Lower leg skin (tissue), 4 donors: ENCODE measurements at regions of chr2 and their contacts with region 1.

Region 1: GRCh38 chr2:112726497-112727190 is 5.8 kb downstream of the NT5DC4 start:
- DNase-seq: peak; percentile 87 to 98
- H3K4me3 ChIP-seq: no peak overlapping the region
- CTCF ChIP-seq: peak in 1 of 3 donors; percentile 94
- POLR2A ChIP-seq: no peak

Region 2: GRCh38 chr2:112138159-112138773 is 588.4 kb before region 1 on chr2 and contains the start of gene FBLN7:
- intact Hi-C with region 1: no loop called
- DNase-seq: peak in 1 of 2 donors; percentile 86
- H3K4me3 ChIP-seq: peak within 1 kb of the TSS; percentile 39
- CTCF ChIP-seq: no peak
- POLR2A ChIP-seq: no peak
- total RNA-seq, gene FBLN7: 3.6 to 10.2 (median 5.9) TPM

Region 3: DNA sequence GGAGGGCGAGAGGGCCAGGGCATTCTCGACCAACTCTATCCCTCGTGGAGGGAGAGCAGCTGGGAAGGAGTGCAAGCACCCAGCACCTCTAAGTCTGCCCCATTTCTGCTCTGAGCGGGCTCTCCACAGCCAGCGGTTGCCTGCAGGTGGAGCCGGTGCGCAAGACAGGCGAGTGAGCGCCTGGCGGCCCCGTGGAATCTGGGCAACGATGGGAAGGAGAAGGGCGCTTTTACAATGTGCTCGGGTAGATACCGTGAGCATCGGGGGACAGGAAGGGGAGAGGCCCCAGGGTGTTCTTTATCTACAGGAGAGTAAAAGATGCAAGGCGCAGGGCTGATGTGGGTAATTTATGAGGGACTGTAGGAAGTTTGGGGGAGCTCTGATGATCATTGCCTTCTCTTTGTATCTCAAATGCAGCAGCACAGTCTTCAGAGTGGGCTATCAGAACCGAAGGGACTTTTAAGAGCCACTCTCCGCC is 245.6 kb before region 1 on chr2:
- intact Hi-C with region 1: loop called (anchors 10 kb)
- DNase-seq: peak; percentile 70 to 95
- H3K4me3 ChIP-seq: peak overlapping the region; percentile 63
- CTCF ChIP-seq: peak in 1 of 3 donors; percentile 13
- POLR2A ChIP-seq: no peak

Region 4: GRCh38 chr2:112597537-112598322 is 128.9 kb before region 1 on chr2:
- intact Hi-C with region 1: loop called (anchors 2 kb)
- DNase-seq: no peak
- H3K4me3 ChIP-seq: no peak overlapping the region
- CTCF ChIP-seq: no peak
- POLR2A ChIP-seq: no peak